Caco-2 (cell line): ENCODE measurements at regions of chr11 and their contacts with region 1.

Region 1: DNA sequence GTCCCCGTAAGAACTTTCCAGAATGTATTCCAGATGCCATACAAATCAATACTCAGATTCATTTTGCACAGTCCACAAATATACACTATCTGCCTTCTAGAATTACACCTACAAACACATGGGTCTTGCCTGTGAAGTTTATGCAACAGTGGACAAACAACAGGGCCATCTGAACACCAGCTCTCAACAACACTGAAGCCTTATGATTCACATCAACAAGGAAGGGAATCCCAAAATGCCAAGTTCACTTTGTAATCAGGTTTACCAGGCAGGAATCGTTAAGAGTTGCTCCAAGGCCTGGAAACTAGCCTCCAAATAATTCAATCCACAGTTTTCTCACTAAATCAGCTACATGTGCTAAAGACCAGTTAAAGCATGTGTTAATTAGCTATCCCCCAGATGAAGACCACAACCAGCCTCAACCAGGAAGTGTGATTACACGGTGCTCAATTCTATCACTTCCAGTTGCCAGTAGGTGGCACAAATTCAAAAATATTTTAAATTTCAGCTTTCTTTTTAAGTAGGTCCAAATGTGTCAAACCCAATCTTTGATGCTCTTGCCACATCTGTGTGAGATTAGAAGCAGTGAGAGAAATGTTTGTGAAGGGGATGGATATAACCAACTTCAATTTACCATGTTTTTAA is 139.1 kb upstream of the BDNF start:
- DNase-seq: peak in 1 of 2 experiments; percentile 9
- H3K4me3 ChIP-seq: no peak overlapping the region
- H3K4me3 Mint-ChIP-seq: no peak overlapping the region
- H3K27ac Mint-ChIP-seq: peak overlapping the region; percentile 3
- H3K4me1 ChIP-seq: no peaks in the 10 kb centered on the region
- H3K4me1 Mint-ChIP-seq: peaks cover 12% of the 10 kb centered on the region
- H3K27me3 ChIP-seq: no peaks in the 10 kb centered on the region
- H3K27me3 Mint-ChIP-seq: no peaks in the 10 kb centered on the region
- CTCF ChIP-seq: peak; percentile 12 to 39

Region 2: GRCh38 chr11:28107748-28108618 is 268.6 kb after region 1 on chr11 and contains the starts of genes KIF18A and METTL15:
- CTCF ChIA-PET with region 1: no interaction called
- POLR2A ChIA-PET with region 1: no interaction called
- intact Hi-C with region 1: loop called (anchors 2 kb)
- DNase-seq: peak; percentile 100
- H3K4me3 ChIP-seq: peak within 1 kb of the TSS; percentile 52
- H3K4me3 Mint-ChIP-seq: peak within 1 kb of the TSS; percentile 94
- H3K27ac Mint-ChIP-seq: peak within 1 kb of the TSS; percentile 98
- H3K4me1 ChIP-seq: peaks cover 14% of the 10 kb centered on the region; the same call in 1 of the 2 replicates
- H3K4me1 Mint-ChIP-seq: peaks cover 6% of the 10 kb centered on the region
- H3K27me3 ChIP-seq: no peaks in the 10 kb centered on the region
- H3K27me3 Mint-ChIP-seq: no peaks in the 10 kb centered on the region
- CTCF ChIP-seq: no peak
- total RNA-seq, gene KIF18A: 22.3 and 22.5 TPM in 2 replicates
- total RNA-seq, gene METTL15: 14.4 and 15.2 TPM in 2 replicates

Region 3: GRCh38 chr11:28343276-28344233 is 504.2 kb after region 1 on chr11:
- CTCF ChIA-PET with region 1: no interaction called
- POLR2A ChIA-PET with region 1: no interaction called
- intact Hi-C with region 1: loop called (anchors 5 kb)
- DNase-seq: no peak
- H3K4me3 ChIP-seq: no peak overlapping the region
- H3K4me3 Mint-ChIP-seq: no peak overlapping the region
- H3K27ac Mint-ChIP-seq: no peak overlapping the region
- H3K4me1 ChIP-seq: no peaks in the 10 kb centered on the region
- H3K4me1 Mint-ChIP-seq: no peaks in the 10 kb centered on the region
- H3K27me3 ChIP-seq: no peaks in the 10 kb centered on the region
- H3K27me3 Mint-ChIP-seq: no peaks in the 10 kb centered on the region
- CTCF ChIP-seq: no peak